Activated CD4-positive, alpha-beta T cell treated with anti-CD3 and anti-CD28 coated beads for 36 hours (primary cell): ENCODE measurements at regions of chr16 and their contacts with region 1.

Region 1: GRCh38 chr16:64051824-64052223 is 1070.0 kb downstream of the CDH11 start:
- DNase-seq: no peak
- ATAC-seq: no peak
- H3K4me3 Mint-ChIP-seq: no peak overlapping the region
- H3K27ac Mint-ChIP-seq: no peak overlapping the region
- H3K4me1 Mint-ChIP-seq: no peaks in the 10 kb centered on the region
- H3K27me3 Mint-ChIP-seq: no peaks in the 10 kb centered on the region

Region 2: DNA sequence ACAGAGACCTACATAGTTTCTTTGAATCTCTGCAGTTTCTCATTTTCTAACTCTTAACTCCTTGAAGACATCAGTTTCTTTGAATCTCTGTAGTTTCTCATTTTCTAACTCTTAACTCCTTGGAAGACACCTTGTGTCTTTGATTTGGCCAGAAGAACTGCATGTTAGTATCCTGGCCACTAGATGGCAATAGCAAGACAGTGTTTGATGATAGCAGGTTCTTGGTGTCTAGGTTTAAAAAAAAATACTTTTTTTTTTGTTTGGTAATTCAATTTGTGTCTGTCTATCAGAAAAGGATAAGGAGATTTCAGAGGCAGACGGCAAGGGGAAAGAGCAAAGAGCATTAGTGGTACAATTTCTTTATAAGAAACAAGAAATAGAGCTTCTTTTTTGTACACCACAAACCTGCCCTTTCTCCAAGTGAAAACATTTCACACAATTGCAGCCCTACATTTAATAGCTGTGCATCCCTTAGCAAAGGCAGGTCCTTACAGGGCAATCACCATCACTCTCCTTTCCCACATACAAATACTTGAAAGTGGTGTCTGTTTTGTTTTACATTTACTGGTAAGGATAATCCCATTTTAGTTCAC is 690.7 kb before region 1 on chr16:
- CTCF ChIA-PET with region 1: no interaction called
- POLR2A ChIA-PET with region 1: no interaction called
- intact Hi-C with region 1: loop called in 1 of 2 experiments (anchors 5 kb)
- DNase-seq: peak; percentile 3
- ATAC-seq: no peak
- H3K4me3 Mint-ChIP-seq: no peak overlapping the region
- H3K27ac Mint-ChIP-seq: no peak overlapping the region
- H3K4me1 Mint-ChIP-seq: no peaks in the 10 kb centered on the region
- H3K27me3 Mint-ChIP-seq: no peaks in the 10 kb centered on the region